Spleen (tissue), 13 donors: ENCODE measurements at regions of chr5 and their contacts with region 1.

Region 1: DNA sequence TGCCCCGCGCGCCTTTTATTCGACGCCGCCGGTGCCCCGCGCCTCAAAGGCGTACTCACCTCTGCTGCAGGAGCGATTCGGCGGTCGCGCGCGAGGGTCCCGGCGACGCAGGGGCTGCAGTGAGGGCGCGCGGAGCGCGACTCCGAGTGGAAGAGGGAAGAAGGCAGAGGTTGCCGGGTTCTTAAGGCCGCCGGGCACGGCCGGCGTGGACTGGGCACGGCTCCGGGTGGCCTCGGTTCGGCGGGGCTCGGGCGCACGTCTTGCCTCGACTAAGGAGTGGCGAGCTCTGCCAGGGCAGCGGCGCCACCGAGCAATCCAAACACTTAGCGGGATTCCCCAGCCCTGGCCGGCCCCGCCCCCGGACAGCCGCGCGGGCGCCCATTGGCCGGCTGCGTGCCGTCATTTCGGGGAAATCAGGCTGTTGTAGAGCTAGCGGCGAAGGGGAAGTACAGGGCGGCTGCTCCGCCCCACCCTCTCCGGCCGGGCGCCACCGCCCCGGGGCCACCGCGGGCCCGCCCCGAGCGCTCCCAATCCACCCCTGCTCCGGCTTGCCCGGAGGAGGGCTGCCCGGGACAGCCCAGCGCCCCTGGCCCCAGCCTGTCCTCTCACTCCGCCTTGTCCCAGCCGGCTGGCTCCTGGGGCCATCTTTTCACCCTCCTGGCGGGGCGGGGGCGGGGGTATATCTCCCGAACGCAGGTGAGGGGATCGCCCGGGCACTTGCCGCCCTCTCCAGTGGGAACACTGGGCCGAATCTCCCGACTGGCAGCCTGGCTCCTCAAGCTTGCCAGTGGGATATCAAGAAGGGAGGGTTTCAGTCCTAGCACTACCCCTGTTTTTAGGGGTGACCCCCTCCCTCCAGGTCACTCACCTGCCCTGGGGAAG is at the start of gene IRF1:
- DNase-seq: peak; percentile 99
- H3K4me3 ChIP-seq: peak within 1 kb of the TSS; percentile 78 to 96 (median 94)
- H3K27ac ChIP-seq: peak within 1 kb of the TSS; percentile 96 to 100 (median 100)
- H3K4me1 ChIP-seq: peaks cover 46 to 91% (median 81%) of the 10 kb centered on the region in 6 donors
- H3K27me3 ChIP-seq: no peaks in the 10 kb centered on the region
- CTCF ChIP-seq: peak in 4 of 11 experiments; percentile 19 to 45 (median 32)
- POLR2A ChIP-seq: peak; percentile 92 to 99 (median 92)
- total RNA-seq, gene IRF1: 146 to 307 (median 165) TPM

Region 2: DNA sequence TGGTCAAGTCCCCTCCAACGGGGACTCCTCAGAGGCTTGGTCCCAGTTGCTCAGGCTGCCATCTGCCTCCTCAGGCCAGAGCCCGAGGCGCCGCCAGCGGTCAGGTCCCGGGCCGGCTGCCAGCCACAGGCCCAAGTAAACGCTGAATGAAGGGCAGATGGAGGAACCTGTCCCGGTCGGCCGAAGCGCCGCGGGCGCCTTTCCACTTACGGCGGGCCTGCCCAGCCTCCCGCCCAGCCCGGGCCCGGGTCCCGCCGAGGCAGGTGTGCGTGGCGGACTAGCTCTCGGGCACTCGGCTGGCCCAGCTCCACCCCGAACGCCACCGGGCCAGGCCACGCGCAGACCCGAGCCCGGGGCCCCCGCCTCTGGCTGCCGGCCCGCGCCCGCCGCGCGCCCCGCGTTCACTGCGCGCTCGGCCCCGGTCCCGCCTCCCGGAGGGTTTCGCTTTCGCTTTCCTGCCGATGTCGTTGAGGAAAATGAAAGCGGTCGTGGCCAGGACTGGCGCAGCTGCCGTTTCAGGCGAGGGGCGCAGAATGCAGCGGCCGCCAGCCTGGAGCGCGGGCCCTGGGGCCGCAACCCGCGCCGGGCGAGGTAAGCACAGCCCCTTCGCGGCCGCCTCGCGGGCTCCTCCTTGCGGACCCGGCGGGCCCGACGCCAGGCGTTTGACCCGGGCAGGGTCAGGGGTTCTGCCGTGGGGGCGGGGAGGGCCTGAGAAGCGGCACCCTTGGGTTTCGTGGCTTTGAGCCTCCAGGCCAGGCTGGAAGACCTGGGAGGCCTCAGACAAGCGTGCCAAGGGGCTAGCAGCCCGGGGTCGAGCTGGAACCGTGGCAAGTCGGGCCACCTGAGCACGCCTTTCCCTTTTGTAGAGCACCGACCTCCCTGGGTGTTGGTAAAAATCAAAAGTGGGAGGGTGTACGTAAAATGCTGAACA is 80.0 kb before region 1 on chr5:
- intact Hi-C with region 1: loop called (anchors 5 kb)
- DNase-seq: peak; percentile 97
- H3K4me3 ChIP-seq: peak overlapping the region; percentile 52 to 74 (median 58)
- H3K27ac ChIP-seq: peak overlapping the region; percentile 89 to 99 (median 99)
- H3K4me1 ChIP-seq: peaks cover 42 to 91% (median 78%) of the 10 kb centered on the region in 6 donors
- H3K27me3 ChIP-seq: no peaks in the 10 kb centered on the region
- CTCF ChIP-seq: peak; percentile 28 to 88 (median 73)
- POLR2A ChIP-seq: peak in 2 of 3 donors; percentile 81 to 85